Activated B cell treated with CpG ODN at 0.5 μM for 24 hours (primary cell): ENCODE measurements at regions of chr3 and their contacts with region 1.

Region 1: DNA sequence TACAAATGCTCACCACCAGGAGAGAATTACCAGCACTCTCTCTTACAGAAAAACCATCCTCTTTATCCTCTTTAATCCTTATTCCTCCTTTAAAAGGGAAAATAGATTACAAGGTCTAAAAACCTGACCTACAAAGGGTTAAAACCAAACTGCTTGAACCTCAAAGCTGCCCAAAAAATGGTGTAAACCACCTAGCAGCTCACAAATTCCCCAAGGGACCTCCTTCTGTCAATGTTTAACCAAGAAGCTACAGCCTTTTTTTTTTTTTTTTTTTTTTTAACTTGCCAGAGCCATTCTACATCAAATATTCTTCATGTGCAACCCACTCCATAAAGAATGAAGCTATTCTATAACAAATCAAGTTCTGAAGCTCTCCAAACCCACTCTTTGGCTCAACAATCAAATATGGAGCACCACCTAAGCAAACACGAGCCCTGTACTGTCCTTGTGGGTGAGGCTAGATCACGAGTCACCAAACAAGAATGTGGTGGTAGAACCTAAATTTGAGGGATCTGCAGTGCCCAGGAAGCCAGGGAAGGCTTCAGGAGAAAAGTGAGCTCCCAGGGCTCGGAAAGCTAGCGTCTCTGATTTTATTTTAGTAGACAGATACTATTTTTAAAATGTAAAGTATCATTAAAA is 20.1 kb downstream of the OSBPL10 start:
- DNase-seq: no peak
- ATAC-seq: peak; percentile 66
- H3K4me3 Mint-ChIP-seq: peak overlapping the region; percentile 78
- H3K27ac Mint-ChIP-seq: peak overlapping the region; percentile 94
- H3K4me1 Mint-ChIP-seq: peaks cover 80% of the 10 kb centered on the region
- H3K27me3 Mint-ChIP-seq: no peaks in the 10 kb centered on the region
- CTCF ChIP-seq: no peak

Region 2: DNA sequence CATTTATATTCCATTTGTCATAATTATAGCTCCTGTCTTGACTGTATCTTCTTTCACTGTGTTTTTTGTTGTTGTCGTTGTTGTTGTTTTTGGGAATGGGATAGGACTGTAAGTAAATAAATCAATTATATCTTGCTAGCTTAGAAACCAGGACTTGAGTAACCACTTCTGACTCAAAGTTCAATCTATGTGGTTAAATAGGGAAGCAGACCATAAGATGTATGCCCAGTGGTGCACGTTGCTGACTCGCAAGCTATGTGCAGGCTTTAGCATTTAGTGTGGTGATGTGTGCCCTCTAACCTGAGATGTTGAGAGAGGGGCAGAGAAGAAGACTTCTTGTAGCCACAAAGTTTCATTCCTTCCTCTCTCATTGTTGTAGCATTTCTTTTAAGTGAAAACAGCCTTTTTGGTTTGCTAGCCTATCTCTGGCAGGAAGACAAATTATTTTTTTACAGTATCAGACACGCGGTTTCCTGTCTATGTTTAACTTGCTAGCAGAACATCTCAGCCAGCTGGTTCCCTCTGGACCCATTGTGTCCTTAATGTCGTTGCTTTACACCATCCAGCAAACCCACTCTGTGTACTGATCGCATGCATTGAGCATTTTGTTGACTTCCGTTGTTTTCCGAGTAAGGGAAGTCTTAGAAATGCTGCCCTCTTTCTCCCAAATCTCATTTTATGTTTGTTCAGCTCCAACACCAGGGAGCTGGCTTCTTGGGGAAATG is 1302.4 kb before region 1 on chr3:
- CTCF ChIA-PET with region 1: no interaction called
- POLR2A ChIA-PET with region 1: no interaction called
- intact Hi-C with region 1: loop called (anchors 10 kb)
- DNase-seq: no peak
- ATAC-seq: peak; percentile 87
- H3K4me3 Mint-ChIP-seq: peak overlapping the region; percentile 12
- H3K27ac Mint-ChIP-seq: peak overlapping the region; percentile 82
- H3K4me1 Mint-ChIP-seq: peaks cover 94% of the 10 kb centered on the region
- H3K27me3 Mint-ChIP-seq: no peaks in the 10 kb centered on the region
- CTCF ChIP-seq: no peak

Region 3: DNA sequence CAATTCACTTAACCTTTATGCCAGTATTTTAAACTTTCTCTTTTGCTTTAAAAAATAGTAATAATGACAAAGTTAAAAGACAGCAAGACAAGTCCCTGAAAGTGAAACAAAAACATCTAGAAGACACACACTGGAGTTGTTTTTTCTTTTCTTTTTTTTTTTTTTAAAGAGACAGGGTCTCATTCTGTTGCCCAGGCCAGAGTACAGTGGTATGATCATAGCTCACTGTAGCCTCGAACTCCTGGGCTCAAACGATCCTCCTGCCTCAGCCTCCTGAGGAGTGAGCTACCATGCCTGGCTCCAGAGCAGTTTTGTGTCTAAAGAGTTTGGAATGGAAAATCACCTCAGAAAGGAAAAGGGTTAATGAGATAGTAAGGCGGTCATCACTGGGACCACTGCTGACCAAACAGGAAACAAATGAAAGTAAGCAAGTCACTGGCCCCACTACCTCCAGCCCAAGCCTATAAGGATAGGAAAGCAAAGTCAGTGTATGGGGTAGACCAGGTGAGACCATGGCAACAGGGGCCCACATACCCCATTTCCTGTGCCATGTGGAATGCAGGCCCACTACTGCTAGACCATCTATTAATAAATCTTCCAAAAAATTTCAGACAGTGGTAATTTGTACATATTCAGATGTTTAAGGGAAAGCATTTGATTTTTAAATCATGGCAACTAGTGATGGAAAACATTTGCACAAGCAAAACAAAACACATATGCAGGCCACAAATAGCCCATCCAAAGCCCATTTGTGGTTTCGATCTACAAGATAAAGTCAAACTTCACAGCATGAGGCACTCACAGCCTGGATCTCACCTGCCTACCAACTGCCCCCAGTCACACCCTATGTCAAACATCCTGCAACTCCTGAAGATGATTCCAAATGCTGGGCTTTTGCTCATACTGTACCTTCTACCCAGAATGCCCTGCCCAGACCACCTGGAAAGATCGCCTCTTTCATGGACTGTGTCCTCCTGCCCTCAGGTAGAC is 42.4 kb before region 1 on chr3:
- CTCF ChIA-PET with region 1: no interaction called
- POLR2A ChIA-PET with region 1: interaction called, 6 read pairs
- intact Hi-C with region 1: loop called (anchors 2 kb)
- DNase-seq: no peak
- ATAC-seq: peak; percentile 53
- H3K4me3 Mint-ChIP-seq: peak overlapping the region; percentile 58
- H3K27ac Mint-ChIP-seq: peak overlapping the region; percentile 91
- H3K4me1 Mint-ChIP-seq: peaks cover 78% of the 10 kb centered on the region
- H3K27me3 Mint-ChIP-seq: no peaks in the 10 kb centered on the region
- CTCF ChIP-seq: no peak

Region 4: DNA sequence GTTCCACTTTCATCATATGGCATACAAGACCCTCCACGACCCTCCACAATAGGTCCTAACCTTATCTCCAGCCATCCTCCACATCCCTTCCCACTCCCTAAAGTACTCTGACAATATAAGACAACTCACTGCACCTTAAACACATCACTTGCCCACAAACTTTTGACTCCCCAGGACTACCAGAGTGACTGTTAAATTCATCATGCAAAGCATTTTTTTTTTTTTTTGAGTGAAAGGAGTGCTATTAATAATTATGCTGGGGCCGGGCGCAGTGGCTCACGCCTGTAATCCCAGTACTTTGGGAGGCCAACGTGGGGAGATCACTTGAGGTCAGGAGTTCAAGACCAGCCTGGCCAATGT is 35.7 kb before region 1 on chr3:
- CTCF ChIA-PET with region 1: no interaction called
- POLR2A ChIA-PET with region 1: interaction called, 10 read pairs
- intact Hi-C with region 1: loop called (anchors 1 kb)
- DNase-seq: no peak
- ATAC-seq: peak; percentile 51
- H3K4me3 Mint-ChIP-seq: peak overlapping the region; percentile 36
- H3K27ac Mint-ChIP-seq: peak overlapping the region; percentile 84
- H3K4me1 Mint-ChIP-seq: peaks cover 84% of the 10 kb centered on the region
- H3K27me3 Mint-ChIP-seq: no peaks in the 10 kb centered on the region
- CTCF ChIP-seq: no peak

Region 5: GRCh38 chr3:31999907-32000439 is 39.1 kb after region 1 on chr3:
- CTCF ChIA-PET with region 1: interaction called, 3 read pairs
- POLR2A ChIA-PET with region 1: interaction called, 7 read pairs
- intact Hi-C with region 1: loop called (anchors 2 kb)
- DNase-seq: no peak
- ATAC-seq: peak; percentile 86
- H3K4me3 Mint-ChIP-seq: peak overlapping the region; percentile 65
- H3K27ac Mint-ChIP-seq: peak overlapping the region; percentile 94
- H3K4me1 Mint-ChIP-seq: peaks cover 68% of the 10 kb centered on the region
- H3K27me3 Mint-ChIP-seq: no peaks in the 10 kb centered on the region
- CTCF ChIP-seq: no peak